ENCODE measurements at regions of chr6 and their contacts with region 1.

Region 1: DNA sequence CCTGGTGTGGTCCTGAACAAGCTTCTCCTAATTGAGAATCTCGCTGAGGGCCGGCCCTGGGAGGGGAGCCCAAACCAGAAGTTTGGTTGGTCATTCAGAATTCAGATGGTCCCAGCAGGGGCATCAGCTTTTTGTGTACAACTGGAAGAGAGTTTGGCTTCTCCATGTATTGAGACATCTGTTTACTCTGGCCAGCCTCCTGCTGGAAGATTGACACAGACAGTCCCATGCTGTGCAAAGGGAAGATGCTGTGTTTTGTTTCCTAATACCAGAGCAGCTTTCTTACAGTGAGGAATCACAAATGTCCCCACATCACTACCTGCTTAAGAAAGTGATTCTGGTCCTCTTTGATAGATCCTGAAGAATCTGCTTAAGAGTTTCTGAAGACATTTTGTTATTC is 97.8 kb downstream of the PLEKHG1 start:
- DNase-seq: no peak
- ATAC-seq: no peak
- H3K4me3 ChIP-seq: no peak overlapping the region
- H3K27ac ChIP-seq: no peak overlapping the region
- H3K4me1 ChIP-seq: peaks cover 12 to 14% of the 10 kb centered on the region in 2 experiments
- H3K27me3 ChIP-seq: no peaks in the 10 kb centered on the region
- CTCF ChIP-seq: no peak
- POLR2A ChIP-seq: no peak
- RAD21 ChIP-seq: no peak

Region 2: DNA sequence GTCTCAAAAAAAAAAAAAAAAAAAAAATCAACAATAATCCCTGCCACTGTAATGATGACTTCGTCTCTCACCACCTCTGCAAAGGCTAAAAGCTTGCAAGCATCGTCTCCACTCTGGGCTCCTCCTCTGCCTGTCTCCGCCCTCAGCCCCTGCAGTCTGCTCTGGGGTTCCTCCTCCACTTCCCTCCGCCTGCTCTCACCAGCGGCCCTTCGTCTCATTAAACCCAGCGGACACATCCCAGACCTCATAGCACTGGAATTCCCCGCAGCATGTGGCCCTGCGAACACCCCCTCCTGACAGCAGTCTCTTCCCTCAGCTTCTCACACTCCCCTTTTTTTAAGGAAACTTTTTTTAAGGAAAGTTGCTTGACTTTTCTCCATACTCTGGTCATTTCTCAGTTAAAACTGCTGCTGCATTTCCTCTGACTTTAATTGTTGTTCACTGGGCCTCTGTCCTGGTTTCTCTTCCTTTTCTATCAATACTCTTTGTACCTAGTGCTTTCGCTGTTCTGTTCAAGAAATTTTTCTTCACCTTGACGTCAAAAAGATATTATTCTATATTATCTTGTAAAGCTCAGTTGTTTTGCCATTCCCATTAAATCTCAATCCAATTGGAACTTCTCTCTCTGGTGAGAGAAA is 168.7 kb before region 1 on chr6:
- CTCF ChIA-PET with region 1: no interaction called
- POLR2A ChIA-PET with region 1: no interaction called
- RAD21 ChIA-PET with region 1: no interaction called
- intact Hi-C with region 1: no loop called
- DNase-seq: no peak
- ATAC-seq: no peak
- H3K4me3 ChIP-seq: no peak overlapping the region
- H3K27ac ChIP-seq: no peak overlapping the region
- H3K4me1 ChIP-seq: no peaks in the 10 kb centered on the region
- H3K27me3 ChIP-seq: no peaks in the 10 kb centered on the region
- CTCF ChIP-seq: no peak
- POLR2A ChIP-seq: no peak
- RAD21 ChIP-seq: no peak

Region 3: GRCh38 chr6:150579611-150580010 is 117.9 kb before region 1 on chr6:
- CTCF ChIA-PET with region 1: no interaction called
- POLR2A ChIA-PET with region 1: no interaction called
- RAD21 ChIA-PET with region 1: no interaction called
- intact Hi-C with region 1: no loop called
- DNase-seq: no peak
- ATAC-seq: no peak
- H3K4me3 ChIP-seq: no peak overlapping the region
- H3K27ac ChIP-seq: no peak overlapping the region
- H3K4me1 ChIP-seq: peaks cover 0 to 6% of the 10 kb centered on the region in 2 experiments; a peak in 1 of 4 replicates
- H3K27me3 ChIP-seq: no peaks in the 10 kb centered on the region
- CTCF ChIP-seq: no peak
- POLR2A ChIP-seq: no peak
- RAD21 ChIP-seq: no peak

Region 4: DNA sequence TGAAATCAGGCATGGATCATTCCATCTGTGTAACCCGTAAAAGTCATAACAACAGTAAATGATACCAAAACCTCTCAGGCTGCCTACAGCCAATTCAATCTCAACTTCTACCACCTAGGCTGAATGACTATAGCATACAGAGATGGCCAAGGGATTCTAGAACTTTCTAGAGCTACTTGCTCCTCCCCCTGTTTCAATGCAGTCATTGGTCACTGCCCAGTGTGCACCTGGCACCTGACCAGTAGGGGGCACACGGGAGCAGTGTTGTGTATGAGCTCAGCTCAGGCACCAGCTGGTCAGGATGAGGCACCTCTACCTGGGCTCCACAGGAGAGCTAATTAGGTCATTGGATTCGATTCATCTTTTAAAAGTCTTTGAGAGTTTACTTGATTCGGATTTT is 11.7 kb before region 1 on chr6:
- CTCF ChIA-PET with region 1: interaction called, 30 read pairs
- POLR2A ChIA-PET with region 1: interaction called, 3 read pairs
- RAD21 ChIA-PET with region 1: no interaction called
- intact Hi-C with region 1: no loop called
- DNase-seq: peak; percentile 39
- ATAC-seq: peak; percentile 99
- H3K4me3 ChIP-seq: no peak overlapping the region
- H3K27ac ChIP-seq: no peak overlapping the region
- H3K4me1 ChIP-seq: peaks cover 0 to 10% of the 10 kb centered on the region in 2 experiments; a peak in 2 of 4 replicates
- H3K27me3 ChIP-seq: no peaks in the 10 kb centered on the region
- CTCF ChIP-seq: peak; percentile 64 to 95 (median 90); a peak in 5 of 6 replicates
- POLR2A ChIP-seq: no peak
- RAD21 ChIP-seq: peak; percentile 74

Measured in HCT116 (cell line).